Calu3 (cell line): ENCODE measurements at regions of chr3 and their contacts with region 1.

Region 1: GRCh38 chr3:43378066-43378935 is 92.0 kb downstream of the SNRK start:
- DNase-seq: peak; percentile 67
- H3K4me3 Mint-ChIP-seq: no peak overlapping the region
- H3K27ac Mint-ChIP-seq: no peak overlapping the region
- H3K4me1 Mint-ChIP-seq: no peaks in the 10 kb centered on the region
- H3K27me3 Mint-ChIP-seq: no peaks in the 10 kb centered on the region
- CTCF ChIP-seq: peak; percentile 51

Region 2: GRCh38 chr3:43155464-43156121 is 222.7 kb before region 1 on chr3:
- CTCF ChIA-PET with region 1: interaction called, 3 read pairs
- intact Hi-C with region 1: loop called (anchors 2 kb)
- DNase-seq: peak; percentile 73
- H3K4me3 Mint-ChIP-seq: no peak overlapping the region
- H3K27ac Mint-ChIP-seq: no peak overlapping the region
- H3K4me1 Mint-ChIP-seq: no peaks in the 10 kb centered on the region
- H3K27me3 Mint-ChIP-seq: peaks cover 47% of the 10 kb centered on the region
- CTCF ChIP-seq: peak; percentile 34